Naive thymus-derived CD4-positive, alpha-beta T cell (primary cell): ENCODE measurements at regions of chr12 and their contacts with region 1.

Region 1: DNA sequence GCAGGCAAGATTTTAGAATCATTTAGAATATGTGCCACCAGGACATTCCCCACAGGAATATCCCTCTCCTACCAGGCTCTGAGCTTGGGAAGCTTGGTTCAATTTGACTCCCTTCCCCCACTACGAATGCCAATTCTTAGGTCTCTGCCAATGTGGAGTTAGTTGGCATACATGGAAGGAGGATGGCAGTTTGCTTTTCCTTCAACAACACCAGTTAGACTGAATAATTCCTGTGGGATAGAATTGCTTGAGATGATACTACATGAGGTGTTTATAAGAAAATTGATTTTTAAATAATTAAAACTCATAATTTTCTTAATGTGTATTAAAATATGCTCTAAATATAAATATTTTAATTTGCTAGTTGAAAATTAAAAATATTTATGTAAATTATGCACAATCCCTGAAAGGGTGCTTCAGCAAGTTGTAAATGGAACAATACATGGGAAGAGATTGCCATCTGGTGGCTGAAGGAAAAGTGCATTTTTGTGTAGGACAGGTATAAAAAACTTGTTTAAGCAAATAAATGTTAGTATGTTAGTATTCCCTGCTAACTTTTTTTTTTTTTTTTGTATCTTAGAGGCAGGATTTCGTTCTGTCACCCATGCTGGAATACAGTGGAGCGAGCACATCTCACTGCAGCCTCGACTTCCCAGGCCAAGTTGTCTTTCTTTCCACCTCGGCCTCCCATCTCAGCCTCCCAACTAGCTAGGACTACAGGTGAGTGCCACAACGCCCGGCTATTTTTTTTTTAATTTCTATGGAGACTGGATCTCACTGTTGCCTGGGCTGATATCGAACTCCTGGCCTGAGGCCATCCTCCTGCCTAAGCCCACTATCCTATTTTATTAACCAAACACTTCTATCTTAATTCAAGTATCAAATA is 25.8 kb upstream of the STRAP start:
- DNase-seq: peak in 7 of 9 donors; percentile 45 to 72 (median 64)
- ATAC-seq: peak; percentile 60
- H3K4me3 ChIP-seq: no peak overlapping the region
- H3K4me3 Mint-ChIP-seq: no peak overlapping the region
- H3K27ac ChIP-seq: no peak overlapping the region
- H3K27ac Mint-ChIP-seq: no peak overlapping the region
- H3K4me1 ChIP-seq: no peaks in the 10 kb centered on the region
- H3K4me1 Mint-ChIP-seq: no peaks in the 10 kb centered on the region
- H3K27me3 ChIP-seq: no peaks in the 10 kb centered on the region
- H3K27me3 Mint-ChIP-seq: peaks cover 7 to 35% (median 13%) of the 10 kb centered on the region in 5 donors

Region 2: DNA sequence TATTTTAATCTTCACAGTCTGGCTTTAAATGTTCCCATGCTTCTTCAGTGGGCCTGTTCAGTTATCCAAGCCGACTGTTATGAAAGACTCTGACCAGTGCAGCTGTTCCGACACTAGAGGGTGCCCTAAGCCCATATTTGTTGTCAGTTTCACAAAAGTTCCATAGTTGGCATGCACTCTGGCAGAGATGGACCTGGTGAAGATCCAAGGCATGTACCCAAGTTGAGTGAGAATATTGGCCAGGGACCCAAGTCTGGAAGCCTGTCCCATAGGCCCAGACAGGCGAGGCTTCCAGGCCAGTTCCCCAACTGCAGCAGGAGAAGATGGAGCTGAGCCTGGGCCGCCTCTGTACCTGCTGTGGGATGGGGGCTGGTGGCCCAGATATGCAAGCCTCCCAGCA is 1132.6 kb before region 1 on chr12:
- CTCF ChIA-PET with region 1: no interaction called
- POLR2A ChIA-PET with region 1: no interaction called
- intact Hi-C with region 1: loop called in 1 of 2 experiments (anchors 5 kb)
- DNase-seq: peak; percentile 19 to 67 (median 59)
- ATAC-seq: peak; percentile 83
- H3K4me3 ChIP-seq: no peak overlapping the region
- H3K4me3 Mint-ChIP-seq: no peak overlapping the region
- H3K27ac ChIP-seq: no peak overlapping the region
- H3K27ac Mint-ChIP-seq: no peak overlapping the region
- H3K4me1 ChIP-seq: no peaks in the 10 kb centered on the region
- H3K4me1 Mint-ChIP-seq: peaks cover 0 to 4% (median 0%) of the 10 kb centered on the region in 7 donors
- H3K27me3 ChIP-seq: no peaks in the 10 kb centered on the region
- H3K27me3 Mint-ChIP-seq: peaks cover 0 to 34% (median 10%) of the 10 kb centered on the region in 5 donors

Region 3: DNA sequence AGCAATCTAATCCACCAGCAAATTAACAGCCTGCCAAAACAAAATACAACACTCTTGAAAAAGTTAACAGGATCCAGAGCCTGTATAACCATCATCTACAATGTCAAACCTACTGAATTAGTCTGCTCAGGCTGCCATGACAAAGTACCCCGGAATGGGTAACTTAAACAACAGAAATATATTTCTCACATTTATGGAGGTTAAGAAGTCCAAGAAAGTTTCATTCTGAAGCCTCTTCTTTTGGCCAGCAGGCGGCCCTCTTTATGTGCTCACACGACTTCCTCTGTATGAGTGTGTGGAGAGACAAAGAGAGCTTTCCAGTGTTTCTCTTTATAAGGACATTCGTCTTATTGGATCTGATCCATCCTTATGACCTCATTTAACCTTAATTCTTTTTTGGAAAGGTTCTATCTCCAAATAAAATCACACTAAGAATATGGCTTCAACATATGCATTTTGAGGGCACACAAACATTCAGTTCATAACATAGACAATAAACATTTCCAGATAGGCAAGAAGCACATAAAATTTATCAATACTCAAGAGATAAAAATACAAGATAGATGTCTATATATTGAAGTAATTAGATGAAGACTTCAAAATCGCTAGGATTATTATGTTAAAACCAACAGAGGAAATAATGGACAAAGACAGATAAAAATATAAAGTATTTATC is 629.2 kb before region 1 on chr12:
- CTCF ChIA-PET with region 1: interaction called, 3 read pairs
- POLR2A ChIA-PET with region 1: no interaction called
- intact Hi-C with region 1: loop called (anchors 1 kb)
- DNase-seq: peak in 4 of 9 donors; percentile 10 to 25 (median 20)
- ATAC-seq: peak; percentile 53
- H3K4me3 ChIP-seq: no peak overlapping the region
- H3K4me3 Mint-ChIP-seq: no peak overlapping the region
- H3K27ac ChIP-seq: no peak overlapping the region
- H3K27ac Mint-ChIP-seq: no peak overlapping the region
- H3K4me1 ChIP-seq: no peaks in the 10 kb centered on the region
- H3K4me1 Mint-ChIP-seq: peaks cover 0 to 5% (median 0%) of the 10 kb centered on the region in 7 donors
- H3K27me3 ChIP-seq: no peaks in the 10 kb centered on the region
- H3K27me3 Mint-ChIP-seq: peaks cover 46 to 58% (median 50%) of the 10 kb centered on the region in 5 donors

Region 4: DNA sequence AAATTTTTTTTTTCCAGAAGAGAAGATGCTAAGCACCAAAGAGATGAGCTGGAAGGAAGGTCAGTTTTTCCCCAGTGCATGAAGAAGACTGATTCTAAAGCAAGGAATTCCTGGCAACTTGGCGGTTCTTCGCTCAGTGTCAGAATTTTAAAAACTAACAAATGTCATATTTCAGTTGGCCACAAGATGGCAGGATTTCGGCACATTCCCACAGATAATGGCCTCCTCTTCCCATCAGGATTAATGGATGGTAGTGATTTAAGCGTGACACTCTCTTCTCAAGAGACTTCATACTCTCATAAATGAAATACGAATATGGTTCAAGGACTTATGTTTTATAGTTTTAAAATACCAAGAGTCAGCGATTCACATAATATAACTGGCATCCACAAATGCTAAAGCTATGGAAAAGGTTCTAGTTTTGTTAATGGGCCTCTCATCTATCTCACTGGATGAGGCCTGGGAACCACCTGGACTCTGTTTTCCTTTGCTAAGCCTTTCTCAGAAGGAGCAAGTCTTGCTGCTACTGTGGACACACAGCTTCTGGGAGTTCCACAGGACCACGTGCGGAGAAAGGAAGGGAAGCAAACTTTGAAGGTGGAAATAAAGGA is 580.1 kb before region 1 on chr12:
- CTCF ChIA-PET with region 1: interaction called, 3 read pairs
- POLR2A ChIA-PET with region 1: no interaction called
- intact Hi-C with region 1: loop called (anchors 1 to 2 kb)
- DNase-seq: peak in 2 of 9 donors; percentile 5 to 13
- ATAC-seq: no peak
- H3K4me3 ChIP-seq: no peak overlapping the region
- H3K4me3 Mint-ChIP-seq: no peak overlapping the region
- H3K27ac ChIP-seq: no peak overlapping the region
- H3K27ac Mint-ChIP-seq: no peak overlapping the region
- H3K4me1 ChIP-seq: no peaks in the 10 kb centered on the region
- H3K4me1 Mint-ChIP-seq: peaks cover 0 to 10% (median 0%) of the 10 kb centered on the region in 7 donors
- H3K27me3 ChIP-seq: no peaks in the 10 kb centered on the region
- H3K27me3 Mint-ChIP-seq: peaks cover 0 to 18% (median 15%) of the 10 kb centered on the region in 5 donors

Region 5: DNA sequence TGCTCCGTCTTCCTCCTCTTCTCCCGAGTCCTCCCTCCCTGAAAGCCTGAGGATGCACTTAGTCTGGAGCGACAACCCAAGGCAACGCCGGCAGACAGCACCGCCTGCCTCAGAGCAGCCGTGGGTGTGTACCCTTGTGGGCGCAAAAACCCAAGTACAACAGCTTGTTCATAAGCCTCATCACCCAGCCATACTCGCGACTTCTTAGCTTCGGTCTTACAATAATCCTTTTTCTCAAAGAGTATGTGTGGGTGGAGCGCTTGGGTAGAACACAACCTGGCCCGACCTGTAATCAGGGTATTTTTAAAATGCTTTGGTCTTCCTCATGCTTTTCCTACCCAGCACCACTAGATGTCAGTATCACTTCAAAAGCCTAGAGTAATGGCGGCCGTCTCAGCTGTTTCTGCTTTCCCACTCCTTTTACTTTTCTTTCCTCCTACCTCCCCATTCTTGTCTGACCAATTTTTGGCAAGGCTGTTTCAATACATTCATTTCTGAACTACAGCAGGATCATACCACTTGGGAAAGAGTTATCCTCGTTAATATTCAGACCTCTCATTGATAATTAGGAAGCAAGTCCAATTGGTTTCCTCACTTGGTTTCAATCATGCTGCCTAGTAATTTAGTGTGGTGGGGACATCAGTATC is 266.0 kb before region 1 on chr12:
- CTCF ChIA-PET with region 1: interaction called, 45 read pairs
- POLR2A ChIA-PET with region 1: no interaction called
- intact Hi-C with region 1: loop called (anchors 1 kb)
- DNase-seq: peak; percentile 12 to 74 (median 66)
- ATAC-seq: peak; percentile 98
- H3K4me3 ChIP-seq: peak overlapping the region; percentile 40
- H3K4me3 Mint-ChIP-seq: peak overlapping the region; percentile 63 to 88 (median 78)
- H3K27ac ChIP-seq: no peak overlapping the region
- H3K27ac Mint-ChIP-seq: peak overlapping the region in 8 of 9 donors; percentile 61 to 86 (median 69)
- H3K4me1 ChIP-seq: peaks cover 0 to 5% of the 10 kb centered on the region in 2 donors
- H3K4me1 Mint-ChIP-seq: peaks cover 0 to 12% (median 8%) of the 10 kb centered on the region in 7 donors
- H3K27me3 ChIP-seq: no peaks in the 10 kb centered on the region
- H3K27me3 Mint-ChIP-seq: peaks cover 0 to 4% (median 0%) of the 10 kb centered on the region in 5 donors

Region 6: GRCh38 chr12:15789220-15790171 is 66.8 kb before region 1 on chr12 and contains the start of gene EPS8:
- CTCF ChIA-PET with region 1: no interaction called
- POLR2A ChIA-PET with region 1: interaction called, 3 read pairs
- intact Hi-C with region 1: loop called in 1 of 2 experiments (anchors 2 kb)
- DNase-seq: peak; percentile 82 to 92 (median 91)
- ATAC-seq: peak; percentile 95
- H3K4me3 ChIP-seq: peak within 1 kb of the TSS; percentile 78
- H3K4me3 Mint-ChIP-seq: peak within 1 kb of the TSS; percentile 91 to 99 (median 96)
- H3K27ac ChIP-seq: peak within 1 kb of the TSS; percentile 63
- H3K27ac Mint-ChIP-seq: peak within 1 kb of the TSS; percentile 58 to 97 (median 84)
- H3K4me1 ChIP-seq: peaks cover 0 to 7% of the 10 kb centered on the region in 2 donors
- H3K4me1 Mint-ChIP-seq: peaks cover 10 to 17% (median 15%) of the 10 kb centered on the region in 7 donors
- H3K27me3 ChIP-seq: peaks cover 0 to 11% of the 10 kb centered on the region in 2 donors
- H3K27me3 Mint-ChIP-seq: peaks cover 26 to 74% (median 49%) of the 10 kb centered on the region in 5 donors
- total RNA-seq, gene EPS8: 2.0 to 3.1 (median 2.7) TPM

Region 7: GRCh38 chr12:16573398-16574077 is 717.2 kb after region 1 on chr12:
- CTCF ChIA-PET with region 1: no interaction called
- POLR2A ChIA-PET with region 1: no interaction called
- intact Hi-C with region 1: no loop called
- DNase-seq: no peak
- ATAC-seq: no peak
- H3K4me3 ChIP-seq: no peak overlapping the region
- H3K4me3 Mint-ChIP-seq: no peak overlapping the region
- H3K27ac ChIP-seq: no peak overlapping the region
- H3K27ac Mint-ChIP-seq: no peak overlapping the region
- H3K4me1 ChIP-seq: no peaks in the 10 kb centered on the region
- H3K4me1 Mint-ChIP-seq: no peaks in the 10 kb centered on the region
- H3K27me3 ChIP-seq: no peaks in the 10 kb centered on the region
- H3K27me3 Mint-ChIP-seq: no peaks in the 10 kb centered on the region